ENCODE measurements at regions of chr11 and their contacts with region 1.

Region 1: DNA sequence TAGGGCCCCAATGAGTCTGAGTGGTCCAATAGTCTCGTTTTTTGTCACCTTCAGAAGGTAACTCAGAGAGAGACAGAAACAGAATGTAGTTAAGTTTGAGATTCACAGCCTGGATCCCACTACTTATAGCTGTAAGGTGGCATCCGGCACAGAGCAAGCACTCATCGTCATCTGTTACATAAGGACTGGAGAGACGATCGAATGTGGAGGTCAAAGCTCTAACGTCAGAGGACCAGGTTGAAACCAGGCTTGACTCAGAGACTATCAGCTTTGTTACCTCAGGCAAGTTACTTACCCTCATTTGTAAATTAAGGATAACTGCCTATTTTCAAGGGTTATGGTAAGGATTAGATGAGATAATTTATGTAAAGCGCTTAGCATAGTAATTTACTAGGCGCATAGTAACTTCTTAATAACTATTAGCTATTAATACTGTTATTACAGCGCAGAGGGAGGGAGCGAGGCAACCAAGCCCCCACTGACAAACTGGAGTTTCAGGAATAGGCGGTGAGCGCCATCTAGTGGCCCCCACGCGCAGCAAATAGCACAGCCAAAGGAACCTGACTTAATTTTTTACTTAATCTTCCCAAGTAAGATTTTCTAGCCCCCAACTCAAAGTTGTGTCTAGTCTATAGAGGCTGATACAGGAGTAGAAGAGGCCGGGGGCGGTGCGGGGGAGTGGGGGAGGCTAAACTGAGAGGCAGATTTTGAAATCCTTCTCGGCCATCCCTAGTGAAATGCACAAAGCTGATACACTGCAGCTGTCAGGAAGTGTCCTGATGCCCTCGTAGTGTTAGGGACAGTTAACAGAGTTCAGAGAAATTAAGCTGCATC is 29.0 kb upstream of the API5 start:
- DNase-seq: peak; percentile 64
- ATAC-seq: peak; percentile 44
- H3K4me3 Mint-ChIP-seq: no peak overlapping the region
- H3K27ac Mint-ChIP-seq: no peak overlapping the region
- H3K4me1 Mint-ChIP-seq: no peaks in the 10 kb centered on the region
- H3K27me3 Mint-ChIP-seq: peaks cover 15% of the 10 kb centered on the region

Region 2: DNA sequence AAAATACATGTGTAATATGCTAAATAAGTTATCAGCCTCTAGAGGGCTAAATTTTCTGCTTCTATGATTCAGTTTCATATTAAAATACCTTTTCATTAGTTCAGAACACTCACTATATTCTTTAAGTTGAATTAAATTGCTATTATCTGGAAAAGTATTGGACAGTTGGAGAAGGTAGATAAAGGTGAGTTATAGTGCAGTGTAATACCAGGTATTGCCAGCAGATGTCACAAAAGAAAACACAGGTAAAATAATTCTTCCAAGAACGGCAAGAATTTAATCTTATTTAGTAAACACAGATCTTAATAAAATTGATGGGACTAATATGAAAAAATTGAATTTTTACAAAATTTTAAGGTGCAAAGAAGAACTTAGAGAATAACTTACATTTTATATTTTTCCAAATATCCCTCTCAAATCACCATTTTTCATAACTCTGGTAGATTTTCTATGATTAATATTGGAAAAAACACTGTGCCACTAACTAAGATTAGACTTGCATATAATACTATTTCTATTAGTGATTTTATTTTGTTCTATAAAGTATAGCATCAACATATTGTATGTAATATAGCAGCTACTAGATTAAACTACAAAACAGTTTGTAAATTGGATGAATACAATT is 1821.7 kb before region 1 on chr11:
- CTCF ChIA-PET with region 1: interaction called, 15 read pairs
- POLR2A ChIA-PET with region 1: no interaction called
- intact Hi-C with region 1: loop called (anchors 2 to 5 kb)
- DNase-seq: no peak
- ATAC-seq: no peak
- H3K4me3 Mint-ChIP-seq: no peak overlapping the region
- H3K27ac Mint-ChIP-seq: no peak overlapping the region
- H3K4me1 Mint-ChIP-seq: no peaks in the 10 kb centered on the region
- H3K27me3 Mint-ChIP-seq: peaks cover 14% of the 10 kb centered on the region

Region 3: GRCh38 chr11:42770444-42771065 is 512.3 kb before region 1 on chr11:
- CTCF ChIA-PET with region 1: interaction called, 3 read pairs
- POLR2A ChIA-PET with region 1: no interaction called
- intact Hi-C with region 1: loop called (anchors 2 to 5 kb)
- DNase-seq: peak; percentile 11
- ATAC-seq: no peak
- H3K4me3 Mint-ChIP-seq: no peak overlapping the region
- H3K27ac Mint-ChIP-seq: no peak overlapping the region
- H3K4me1 Mint-ChIP-seq: no peaks in the 10 kb centered on the region
- H3K27me3 Mint-ChIP-seq: no peaks in the 10 kb centered on the region

Region 4: DNA sequence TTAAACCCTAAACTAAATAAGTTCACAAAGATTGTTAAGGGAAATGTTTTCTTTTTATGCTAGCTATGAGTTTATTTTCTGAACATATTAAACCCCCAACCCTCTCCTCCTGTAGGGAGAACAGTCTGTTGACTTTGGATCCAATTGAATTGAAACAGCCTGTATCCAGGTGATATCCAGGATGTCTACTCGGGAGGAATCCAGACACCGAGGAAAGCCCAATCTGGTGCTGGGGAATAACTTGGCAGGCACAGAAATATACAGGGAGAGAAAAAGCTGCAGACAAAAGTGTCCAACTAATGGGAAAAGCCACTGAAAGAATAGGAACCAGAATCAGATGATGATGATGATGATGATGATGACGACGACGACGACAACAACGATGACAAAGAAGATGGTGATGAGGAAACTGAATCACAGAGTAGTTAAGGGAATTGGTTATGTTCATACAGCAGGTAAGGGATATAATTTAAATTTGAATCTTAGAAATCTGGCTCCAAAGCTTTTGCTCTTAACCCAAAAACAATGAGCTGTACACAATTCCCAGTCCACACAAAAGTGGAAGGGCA is 64.9 kb before region 1 on chr11:
- CTCF ChIA-PET with region 1: no interaction called
- POLR2A ChIA-PET with region 1: no interaction called
- intact Hi-C with region 1: no loop called
- DNase-seq: no peak
- ATAC-seq: no peak
- H3K4me3 Mint-ChIP-seq: no peak overlapping the region
- H3K27ac Mint-ChIP-seq: no peak overlapping the region
- H3K4me1 Mint-ChIP-seq: no peaks in the 10 kb centered on the region
- H3K27me3 Mint-ChIP-seq: peaks cover 3% of the 10 kb centered on the region

Region 5: DNA sequence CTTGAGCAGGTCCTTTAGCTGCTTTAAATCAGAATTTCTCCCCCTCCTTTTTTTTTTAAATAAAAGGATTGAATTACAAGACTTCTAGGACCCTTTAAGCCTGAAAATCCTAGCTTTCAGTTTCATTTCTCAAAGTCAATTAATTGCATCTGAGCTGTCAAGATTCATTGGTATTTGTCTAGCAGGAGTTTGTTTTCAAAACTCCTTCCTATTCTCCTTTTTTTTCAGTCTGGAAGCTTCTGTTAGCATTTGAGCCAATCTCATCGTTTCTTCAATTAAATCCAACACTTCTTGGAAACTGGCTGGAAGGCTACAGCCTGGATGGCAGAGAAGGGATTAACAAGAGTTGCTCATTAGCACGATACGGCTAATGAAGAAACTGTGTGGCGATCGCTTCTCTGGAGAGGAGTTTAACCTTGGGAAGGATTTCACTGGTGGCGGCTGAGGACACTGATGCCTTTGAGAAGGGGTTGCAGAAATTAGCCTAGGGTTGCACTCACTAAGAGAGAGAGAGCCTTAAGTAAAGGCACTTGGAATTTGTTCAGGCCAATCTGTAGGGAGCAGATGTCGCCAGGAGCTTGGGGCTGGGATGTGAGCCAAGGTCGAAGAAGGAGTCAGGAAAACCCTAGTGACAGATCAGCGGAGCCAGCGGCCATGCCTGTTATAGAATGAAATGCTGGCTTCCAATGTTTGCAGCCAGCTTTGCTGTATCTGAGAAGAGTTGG is 14.8 kb before region 1 on chr11:
- CTCF ChIA-PET with region 1: interaction called, 6 read pairs
- POLR2A ChIA-PET with region 1: interaction called, 14 read pairs
- intact Hi-C with region 1: no loop called
- DNase-seq: no peak
- ATAC-seq: no peak
- H3K4me3 Mint-ChIP-seq: no peak overlapping the region
- H3K27ac Mint-ChIP-seq: no peak overlapping the region
- H3K4me1 Mint-ChIP-seq: no peaks in the 10 kb centered on the region
- H3K27me3 Mint-ChIP-seq: peaks cover 6% of the 10 kb centered on the region

Region 6: GRCh38 chr11:43723617-43724016 is 440.8 kb after region 1 on chr11:
- CTCF ChIA-PET with region 1: no interaction called
- POLR2A ChIA-PET with region 1: no interaction called
- intact Hi-C with region 1: no loop called
- DNase-seq: no peak
- ATAC-seq: no peak
- H3K4me3 Mint-ChIP-seq: no peak overlapping the region
- H3K27ac Mint-ChIP-seq: no peak overlapping the region
- H3K4me1 Mint-ChIP-seq: no peaks in the 10 kb centered on the region
- H3K27me3 Mint-ChIP-seq: no peaks in the 10 kb centered on the region